Breast epithelium (tissue), 4 donors: ENCODE measurements at regions of chr17 and their contacts with region 1.

Region 1: DNA sequence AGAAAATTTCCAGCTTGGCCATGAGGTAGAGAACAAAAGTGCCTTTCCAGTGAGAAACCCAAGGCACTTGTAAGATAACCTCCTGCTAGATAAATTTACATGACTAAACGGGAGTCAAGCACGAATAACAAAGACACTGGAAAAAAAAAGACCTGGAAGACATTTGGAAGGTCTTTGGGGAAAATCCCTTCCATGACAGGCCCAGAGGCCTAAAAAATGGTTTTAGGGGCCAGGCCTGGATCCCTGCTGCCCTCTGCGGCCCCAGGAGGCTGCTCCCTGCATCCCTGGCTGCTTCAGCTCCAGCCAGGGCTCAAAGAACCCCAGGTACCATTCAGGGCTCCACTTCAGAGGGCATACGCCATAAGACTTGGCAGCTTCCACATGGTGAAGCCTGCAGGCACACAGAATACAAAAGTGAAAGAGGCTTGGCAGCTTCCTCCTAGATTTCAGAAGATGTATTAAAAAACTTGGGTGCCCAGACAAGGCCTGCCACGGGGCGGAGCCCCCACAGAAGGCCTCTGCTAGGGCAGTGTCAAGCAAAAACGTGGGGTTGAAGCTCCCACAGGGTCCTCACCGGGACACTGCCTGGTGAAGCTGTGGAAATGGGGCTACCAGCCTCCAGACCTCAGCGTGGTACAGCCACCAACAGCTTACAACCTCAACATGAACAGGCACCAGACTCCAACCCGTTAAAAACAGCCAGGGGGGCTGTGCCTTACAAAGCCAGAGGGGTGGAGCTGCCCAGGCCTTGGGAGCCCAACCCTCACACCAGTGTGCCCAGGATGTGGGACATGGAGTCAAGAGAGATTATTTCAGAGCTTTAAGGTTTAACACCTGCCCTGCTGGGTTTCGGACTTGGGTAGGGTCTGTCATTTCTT is 77.1 kb downstream of the SDK2 start:
- DNase-seq: peak in 1 of 2 donors; percentile 38
- H3K4me3 ChIP-seq: no peak overlapping the region
- H3K27ac ChIP-seq: peak overlapping the region; percentile 61 to 67
- H3K4me1 ChIP-seq: no peaks in the 10 kb centered on the region
- H3K27me3 ChIP-seq: no peaks in the 10 kb centered on the region
- CTCF ChIP-seq: no peak
- POLR2A ChIP-seq: no peak

Region 2: GRCh38 chr17:73231841-73232586 is 335.1 kb before region 1 on chr17:
- intact Hi-C with region 1: loop called (anchors 10 kb)
- DNase-seq: peak; percentile 94 to 95
- H3K4me3 ChIP-seq: peak overlapping the region; percentile 85 to 99 (median 89)
- H3K27ac ChIP-seq: peak overlapping the region; percentile 81 to 92
- H3K4me1 ChIP-seq: peaks cover 0 to 4% of the 10 kb centered on the region in 2 donors
- H3K27me3 ChIP-seq: no peaks in the 10 kb centered on the region
- CTCF ChIP-seq: peak; percentile 27 to 53 (median 37)
- POLR2A ChIP-seq: peak; percentile 85

Region 3: DNA sequence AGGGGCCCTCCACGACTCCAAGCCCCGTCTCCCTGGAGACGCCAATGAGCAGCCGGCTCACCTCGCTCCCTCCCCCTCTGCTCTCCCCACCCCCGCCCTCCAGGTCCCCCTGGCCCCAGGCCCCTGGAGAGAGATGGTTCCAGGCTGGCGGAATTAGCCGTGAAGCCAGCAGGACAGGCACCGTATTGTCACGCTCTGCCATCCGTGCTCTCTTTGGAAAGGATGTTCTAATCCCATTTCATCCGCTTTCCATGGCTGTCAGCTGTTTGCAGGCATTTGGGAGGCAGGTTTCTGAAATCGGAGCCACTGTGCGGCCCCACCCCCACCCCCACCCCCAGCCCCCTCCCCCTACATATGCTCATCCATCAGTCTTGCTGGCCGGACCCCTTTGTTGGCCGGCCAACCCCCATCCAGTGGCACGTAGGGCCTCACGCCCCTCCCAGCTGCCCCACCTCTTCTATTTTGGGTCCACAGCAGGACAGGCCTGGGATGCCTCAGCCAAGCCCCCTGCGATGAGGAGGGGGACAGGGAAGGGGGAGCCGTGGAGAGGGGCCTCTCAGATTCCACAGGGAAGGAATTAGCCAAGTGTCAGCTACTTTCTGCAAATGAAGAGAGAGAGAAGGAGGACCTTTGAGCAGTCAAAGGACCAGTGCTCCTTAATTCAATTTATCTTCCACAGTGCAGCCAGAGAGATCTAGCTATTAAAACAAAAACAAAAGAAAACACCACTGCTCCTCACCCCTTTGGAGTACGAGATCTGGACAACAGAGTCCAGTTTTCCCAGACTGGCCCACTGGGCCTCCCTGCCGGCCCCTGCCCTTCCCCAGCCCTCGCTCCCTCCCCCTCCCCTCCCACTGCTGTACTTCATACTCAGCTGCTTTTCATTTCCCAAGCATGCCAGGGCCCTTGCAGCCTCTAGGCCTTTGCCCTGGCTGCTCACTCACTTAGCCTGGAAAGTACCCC is 46.4 kb after region 1 on chr17:
- intact Hi-C with region 1: no loop called
- DNase-seq: no peak
- H3K4me3 ChIP-seq: no peak overlapping the region
- H3K27ac ChIP-seq: peak overlapping the region; percentile 20 to 52
- H3K4me1 ChIP-seq: no peaks in the 10 kb centered on the region
- H3K27me3 ChIP-seq: no peaks in the 10 kb centered on the region
- CTCF ChIP-seq: no peak
- POLR2A ChIP-seq: no peak